Heart right ventricle (tissue), 16 donors: ENCODE measurements at regions of chr14 and their contacts with region 1.

Region 1: GRCh38 chr14:50156111-50156510 is 39.7 kb upstream of the VCPKMT start:
- DNase-seq: no peak
- ATAC-seq: no peak
- H3K4me3 ChIP-seq: no peak overlapping the region
- H3K27ac ChIP-seq: no peak overlapping the region
- H3K4me1 ChIP-seq: no peaks in the 10 kb centered on the region
- H3K27me3 ChIP-seq: no peaks in the 10 kb centered on the region
- CTCF ChIP-seq: no peak

Region 2: DNA sequence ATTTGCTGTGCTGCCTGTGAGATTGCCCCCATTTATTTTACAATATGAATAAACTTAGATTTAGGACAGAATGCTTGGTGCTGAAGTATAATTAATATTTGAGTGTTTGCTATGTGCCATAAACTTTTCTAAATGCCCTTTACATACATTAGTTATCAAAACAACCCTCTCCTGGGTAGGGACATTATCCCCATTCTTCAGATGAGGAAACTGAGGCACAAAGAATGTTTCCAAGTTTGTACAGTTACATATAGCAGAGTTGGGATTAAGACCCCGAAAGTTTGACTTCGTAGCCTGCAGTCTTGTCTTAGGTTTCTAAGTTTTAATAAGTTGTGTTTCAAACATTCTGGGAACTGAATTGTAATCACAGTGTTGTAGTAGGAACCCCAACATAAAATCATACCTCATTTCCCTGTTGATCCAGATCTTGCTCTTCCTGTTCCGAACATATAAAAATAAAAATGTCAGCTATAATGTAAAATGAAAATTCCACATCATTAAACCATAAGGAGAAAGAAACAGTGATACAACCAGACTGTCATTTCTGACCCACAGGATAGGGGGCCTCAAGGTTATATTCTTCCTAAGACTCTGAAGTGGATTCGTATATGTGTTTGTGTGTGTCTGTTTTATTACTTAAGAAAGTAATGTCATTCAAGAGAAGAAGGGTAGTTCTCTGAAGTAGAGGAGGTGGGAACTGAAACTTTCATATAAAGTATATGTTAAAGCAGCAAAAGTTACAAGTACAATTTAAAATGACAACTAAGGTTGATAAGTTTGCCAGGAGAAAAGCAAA is 369.6 kb before region 1 on chr14:
- intact Hi-C with region 1: loop called in 1 of 10 experiments (anchors 10 kb)
- DNase-seq: no peak
- ATAC-seq: no peak
- H3K4me3 ChIP-seq: no peak overlapping the region
- H3K27ac ChIP-seq: no peak overlapping the region
- H3K4me1 ChIP-seq: no peaks in the 10 kb centered on the region
- H3K27me3 ChIP-seq: no peaks in the 10 kb centered on the region
- CTCF ChIP-seq: no peak

Region 3: GRCh38 chr14:50060871-50061663 is 95.0 kb before region 1 on chr14:
- intact Hi-C with region 1: no loop called
- DNase-seq: peak in 1 of 2 donors; percentile 67
- ATAC-seq: peak; percentile 74 to 87 (median 84)
- H3K4me3 ChIP-seq: no peak overlapping the region
- H3K27ac ChIP-seq: peak overlapping the region; percentile 41 to 92 (median 74)
- H3K4me1 ChIP-seq: peaks cover 14 to 78% (median 22%) of the 10 kb centered on the region in 9 donors
- H3K27me3 ChIP-seq: no peaks in the 10 kb centered on the region
- CTCF ChIP-seq: peak in 4 of 9 donors; percentile 10 to 26 (median 16)